ENCODE measurements at regions of chr11 and their contacts with region 1.

Region 1: DNA sequence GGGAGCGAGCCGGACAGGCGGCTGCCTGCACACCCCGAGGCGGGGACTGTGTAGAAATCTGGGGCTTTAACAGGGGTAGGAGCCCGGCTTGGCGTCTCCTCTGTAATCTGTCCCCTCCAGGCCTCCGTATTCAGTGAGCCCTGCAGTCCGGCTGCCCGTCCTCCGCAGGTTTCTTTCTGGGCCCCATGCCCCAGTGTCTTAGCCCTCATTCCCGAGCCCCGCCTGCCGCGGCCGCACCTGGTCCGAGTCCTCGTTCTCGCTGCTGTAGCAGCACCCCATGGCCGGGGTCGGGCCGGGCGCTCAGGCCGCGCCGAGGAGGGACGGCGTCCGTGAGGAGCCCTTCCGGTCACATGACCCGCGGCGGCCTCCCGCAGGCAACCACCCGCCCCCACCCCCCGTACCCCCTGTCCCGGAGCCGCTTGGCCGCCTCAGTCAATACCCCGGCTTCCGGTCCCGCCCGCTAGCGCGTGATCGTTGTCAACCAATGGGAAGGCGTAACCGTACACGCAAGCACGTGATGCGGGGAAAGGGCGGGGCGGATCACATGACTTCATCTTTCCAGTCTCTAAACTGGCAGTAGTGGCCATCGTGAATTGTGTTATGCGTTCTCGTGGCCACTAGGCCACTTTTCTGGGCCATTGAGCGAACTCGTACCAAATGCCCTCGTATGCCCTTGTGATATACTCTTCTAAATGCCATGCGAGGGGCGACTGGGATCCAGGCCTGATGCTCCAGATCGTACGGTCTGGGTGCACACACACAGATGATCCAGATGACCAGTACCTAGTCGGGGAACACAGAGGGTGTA is at the start of gene LAMTOR1:
- DNase-seq: peak; percentile 100
- ATAC-seq: peak; percentile 90 to 94
- H3K4me3 ChIP-seq: peak within 1 kb of the TSS; percentile 71 to 95 (median 88)
- H3K27ac ChIP-seq: peak within 1 kb of the TSS; percentile 92 to 97 (median 93)
- H3K4me1 ChIP-seq: peaks cover 46 to 49% of the 10 kb centered on the region in 2 donors
- H3K27me3 ChIP-seq: no peaks in the 10 kb centered on the region
- CTCF ChIP-seq: peak; percentile 46 to 72 (median 60)
- POLR2A ChIP-seq: peak; percentile 83 to 85
- total RNA-seq, gene LAMTOR1: 75.0 to 146 (median 104) TPM

Region 2: DNA sequence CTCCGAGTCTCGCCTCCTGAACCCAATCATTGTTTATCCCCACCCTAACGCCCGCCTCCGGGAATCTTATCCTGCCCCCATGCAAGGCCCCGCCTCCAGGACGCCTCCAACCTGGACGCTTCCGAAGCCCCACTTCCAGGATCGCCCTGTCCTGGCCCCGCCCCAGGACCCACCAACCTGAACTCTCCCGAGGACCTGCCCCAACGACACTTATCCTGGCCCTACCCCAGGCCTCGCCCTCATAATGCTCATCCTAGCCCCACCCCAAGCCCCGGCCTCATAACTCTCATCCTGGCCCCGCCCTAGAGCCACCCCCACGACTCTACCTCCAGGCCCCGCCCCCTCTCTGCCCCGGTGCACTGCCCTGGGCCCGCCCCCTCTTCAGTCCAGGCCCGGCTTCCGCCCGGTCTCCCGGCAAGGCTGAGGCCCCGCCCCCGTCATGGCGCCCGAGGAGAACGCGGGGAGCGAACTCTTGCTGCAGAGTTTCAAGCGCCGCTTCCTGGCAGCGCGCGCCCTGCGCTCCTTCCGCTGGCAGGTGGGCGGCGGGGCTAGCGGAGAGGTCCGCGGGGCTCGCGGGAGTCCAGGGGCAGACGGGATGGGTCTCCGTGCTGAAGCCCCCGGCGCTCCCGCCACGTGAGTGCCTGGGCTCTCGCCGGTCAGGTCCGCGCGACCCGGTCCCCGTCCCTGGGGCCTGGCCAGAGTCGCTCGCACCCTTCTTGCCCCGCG is 315.9 kb before region 1 on chr11:
- in situ Hi-C with region 1: no loop called
- intact Hi-C with region 1: loop called (anchors 10 kb)
- DNase-seq: peak; percentile 21 to 91
- ATAC-seq: peak; percentile 99 to 100
- H3K4me3 ChIP-seq: peak overlapping the region; percentile 63 to 85 (median 78)
- H3K27ac ChIP-seq: peak overlapping the region; percentile 73 to 92 (median 88)
- H3K4me1 ChIP-seq: peaks cover 6% of the 10 kb centered on the region in 2 donors
- H3K27me3 ChIP-seq: no peaks in the 10 kb centered on the region
- CTCF ChIP-seq: no peak
- POLR2A ChIP-seq: peak; percentile 62 to 65

Region 3: DNA sequence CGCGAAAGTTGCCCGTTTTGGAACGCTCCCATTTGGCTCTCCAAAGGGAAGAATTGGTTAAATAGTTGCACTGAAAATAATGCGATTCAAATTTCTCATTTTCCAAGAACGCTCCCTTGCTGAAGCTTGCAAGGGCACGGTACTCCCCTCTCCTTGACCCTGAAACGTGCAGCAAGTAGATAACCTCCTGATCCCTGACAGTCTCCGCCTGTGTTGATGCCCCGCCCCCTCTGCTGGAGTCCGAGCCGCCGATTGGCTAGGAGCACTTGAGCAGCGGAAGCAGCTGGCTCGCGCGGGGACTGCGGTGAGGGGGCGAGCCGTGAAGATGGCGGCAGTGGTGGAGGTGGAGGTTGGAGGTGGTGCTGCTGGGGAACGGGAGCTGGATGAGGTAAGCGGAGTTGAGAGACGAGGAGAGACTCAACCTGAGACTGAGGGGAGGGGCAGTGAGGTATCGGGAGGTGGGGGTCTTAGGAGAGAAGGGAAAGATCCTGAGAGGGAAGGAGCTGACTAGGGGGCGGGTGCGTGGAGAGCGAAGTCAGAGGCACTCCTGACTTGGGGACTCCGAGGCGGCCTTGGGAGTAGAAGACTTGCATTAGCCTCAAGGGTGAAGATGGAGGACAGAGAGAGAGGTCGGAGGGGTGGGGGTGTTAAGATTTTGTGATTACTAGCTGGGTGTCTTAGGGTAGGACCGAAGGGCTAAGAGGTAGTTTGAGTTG is 174.3 kb before region 1 on chr11 and contains the start of gene RNF121:
- in situ Hi-C with region 1: no loop called
- intact Hi-C with region 1: loop called (anchors 2 kb)
- DNase-seq: peak; percentile 97
- ATAC-seq: peak; percentile 97
- H3K4me3 ChIP-seq: peak within 1 kb of the TSS; percentile 82 to 98 (median 90)
- H3K27ac ChIP-seq: peak within 1 kb of the TSS; percentile 84 to 93 (median 90)
- H3K4me1 ChIP-seq: peaks cover 47 to 50% of the 10 kb centered on the region in 2 donors
- H3K27me3 ChIP-seq: no peaks in the 10 kb centered on the region
- CTCF ChIP-seq: no peak
- POLR2A ChIP-seq: peak; percentile 65 to 79
- total RNA-seq, gene RNF121: 25.0 to 35.5 (median 26.7) TPM

Region 4: GRCh38 chr11:72040726-72041441 is 62.3 kb before region 1 on chr11:
- in situ Hi-C with region 1: no loop called
- intact Hi-C with region 1: loop called (anchors 1 kb)
- DNase-seq: peak; percentile 91 to 94
- ATAC-seq: peak; percentile 78 to 79
- H3K4me3 ChIP-seq: peak overlapping the region; percentile 57 to 83 (median 70)
- H3K27ac ChIP-seq: peak overlapping the region; percentile 87 to 97 (median 97)
- H3K4me1 ChIP-seq: peaks cover 40 to 50% of the 10 kb centered on the region in 2 donors
- H3K27me3 ChIP-seq: no peaks in the 10 kb centered on the region
- CTCF ChIP-seq: peak in 1 of 5 experiments; percentile 22
- POLR2A ChIP-seq: peak in 1 of 2 donors; percentile 69

Measured in gastrocnemius medialis (tissue), 4 donors.